CD4-positive, alpha-beta memory T cell (primary cell): ENCODE measurements at regions of chr20 and their contacts with region 1.

Region 1: GRCh38 chr20:62921119-62921687 is 5.1 kb downstream of the DIDO1 start:
- DNase-seq: peak; percentile 58 to 85 (median 62)
- H3K4me3 ChIP-seq: no peak overlapping the region
- H3K4me3 Mint-ChIP-seq: peak overlapping the region; percentile 72 to 92 (median 87)
- H3K27ac ChIP-seq: peak overlapping the region; percentile 36
- H3K27ac Mint-ChIP-seq: peak overlapping the region; percentile 82 to 95 (median 89)
- H3K4me1 ChIP-seq: peaks cover 90% of the 10 kb centered on the region
- H3K4me1 Mint-ChIP-seq: peaks cover 61 to 93% (median 77%) of the 10 kb centered on the region in 4 donors
- H3K27me3 ChIP-seq: no peaks in the 10 kb centered on the region
- H3K27me3 Mint-ChIP-seq: no peaks in the 10 kb centered on the region

Region 2: GRCh38 chr20:62907384-62908317 is 13.6 kb before region 1 on chr20:
- CTCF ChIA-PET with region 1: interaction called, 90 read pairs
- POLR2A ChIA-PET with region 1: interaction called, 49 read pairs
- intact Hi-C with region 1: no loop called
- DNase-seq: peak in 2 of 5 donors; percentile 31 to 36
- H3K4me3 ChIP-seq: no peak overlapping the region
- H3K4me3 Mint-ChIP-seq: no peak overlapping the region
- H3K27ac ChIP-seq: no peak overlapping the region
- H3K27ac Mint-ChIP-seq: peak overlapping the region in 5 of 7 donors; percentile 29 to 68 (median 42)
- H3K4me1 ChIP-seq: no peaks in the 10 kb centered on the region
- H3K4me1 Mint-ChIP-seq: peaks cover 10 to 37% (median 16%) of the 10 kb centered on the region in 4 donors
- H3K27me3 ChIP-seq: no peaks in the 10 kb centered on the region
- H3K27me3 Mint-ChIP-seq: no peaks in the 10 kb centered on the region

Region 3: DNA sequence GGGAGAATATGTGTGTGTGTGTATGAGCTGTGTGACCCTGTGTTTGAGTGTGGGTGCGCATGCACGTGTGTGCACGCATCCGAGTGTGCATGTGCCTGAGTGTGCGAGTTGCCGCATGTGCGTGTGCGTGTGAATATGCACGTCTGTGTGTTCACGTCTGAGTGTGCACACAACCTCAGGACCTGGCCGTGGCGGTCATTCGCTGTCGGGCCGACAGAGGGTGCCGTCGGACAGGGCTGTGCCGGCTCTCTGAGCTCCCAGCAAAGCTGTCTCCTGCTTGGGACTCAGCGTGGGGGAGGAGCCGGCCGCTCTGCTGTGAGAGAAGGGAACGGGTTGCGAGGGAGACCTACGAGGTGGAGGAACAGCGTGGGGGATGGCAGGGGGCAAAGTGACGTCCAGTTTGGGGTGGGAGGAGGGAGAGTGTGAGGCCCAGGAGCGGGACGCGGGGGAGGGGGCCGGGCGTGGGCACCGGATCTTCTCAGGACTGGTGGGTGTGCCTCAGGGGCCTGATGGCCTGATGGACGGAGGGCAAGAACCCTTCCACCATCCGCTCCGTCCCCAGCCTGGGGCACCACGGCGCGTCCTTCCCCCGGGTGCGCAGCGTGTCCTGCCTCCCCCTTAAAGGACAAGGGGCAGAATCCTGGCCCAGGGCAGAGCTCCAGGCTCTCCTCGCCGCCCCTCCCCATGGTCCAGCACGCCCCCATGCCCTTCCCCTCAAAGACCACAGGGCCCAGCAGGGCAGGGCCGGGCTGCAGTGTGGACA is 51.2 kb after region 1 on chr20:
- CTCF ChIA-PET with region 1: interaction called, 11 read pairs
- POLR2A ChIA-PET with region 1: no interaction called
- intact Hi-C with region 1: no loop called
- DNase-seq: peak; percentile 78 to 83 (median 80)
- H3K4me3 ChIP-seq: no peak overlapping the region
- H3K4me3 Mint-ChIP-seq: peak overlapping the region; percentile 64 to 92 (median 75)
- H3K27ac ChIP-seq: no peak overlapping the region
- H3K27ac Mint-ChIP-seq: peak overlapping the region in 3 of 7 donors; percentile 17 to 86 (median 23)
- H3K4me1 ChIP-seq: peaks cover 12% of the 10 kb centered on the region
- H3K4me1 Mint-ChIP-seq: peaks cover 11 to 29% (median 15%) of the 10 kb centered on the region in 4 donors
- H3K27me3 ChIP-seq: peaks cover 6% of the 10 kb centered on the region
- H3K27me3 Mint-ChIP-seq: peaks cover 27 to 28% of the 10 kb centered on the region in 2 donors